ENCODE measurements at regions of chr1 and their contacts with region 1.

Region 1: DNA sequence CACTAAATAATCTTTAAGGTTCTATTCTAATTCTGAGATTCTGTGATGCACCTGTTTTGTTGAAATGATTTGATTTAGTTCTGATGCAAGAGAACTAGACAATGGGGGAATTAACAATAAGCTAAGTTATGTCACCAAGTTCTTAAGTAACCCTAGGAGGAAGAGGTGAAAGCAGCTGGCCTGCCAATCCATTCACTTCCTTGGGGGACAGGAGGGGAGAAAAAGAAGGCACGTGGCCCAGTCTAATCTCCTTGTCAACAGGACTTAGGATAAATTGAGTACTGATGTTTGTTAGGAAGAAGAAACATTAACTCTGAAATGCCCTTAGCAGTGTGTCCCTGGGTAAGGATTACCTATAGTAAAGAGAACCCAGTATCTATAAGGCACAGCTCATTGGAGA is 36.9 kb downstream of the TLCD4 start:
- DNase-seq: no peak
- ATAC-seq: no peak
- H3K4me3 Mint-ChIP-seq: no peak overlapping the region
- H3K27ac Mint-ChIP-seq: no peak overlapping the region
- H3K4me1 Mint-ChIP-seq: no peaks in the 10 kb centered on the region
- H3K27me3 Mint-ChIP-seq: no peaks in the 10 kb centered on the region
- CTCF ChIP-seq: no peak

Region 2: DNA sequence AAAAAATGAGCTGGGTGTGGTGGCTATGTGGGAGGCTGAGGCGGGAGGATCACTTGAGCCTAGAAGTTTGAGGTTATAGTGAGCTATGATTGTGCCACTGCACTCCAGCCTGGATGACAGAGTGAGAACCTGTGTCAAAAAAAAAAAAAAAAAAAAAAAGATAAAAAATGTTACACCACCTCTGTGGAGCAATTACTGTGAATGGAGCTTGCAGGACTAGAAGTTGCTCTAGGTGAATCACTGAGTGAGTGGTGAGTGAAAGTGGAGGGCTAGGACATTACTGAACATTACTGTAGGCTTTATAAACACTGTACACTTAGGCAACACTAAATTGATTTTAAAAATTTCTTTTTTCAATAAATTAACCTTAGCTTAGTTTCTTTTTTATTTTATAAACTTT is 15.1 kb before region 1 on chr1:
- CTCF ChIA-PET with region 1: no interaction called
- POLR2A ChIA-PET with region 1: no interaction called
- DNase-seq: no peak
- ATAC-seq: no peak
- H3K4me3 Mint-ChIP-seq: no peak overlapping the region
- H3K27ac Mint-ChIP-seq: no peak overlapping the region
- H3K4me1 Mint-ChIP-seq: peaks cover 9% of the 10 kb centered on the region
- H3K27me3 Mint-ChIP-seq: no peaks in the 10 kb centered on the region
- CTCF ChIP-seq: no peak

Region 3: DNA sequence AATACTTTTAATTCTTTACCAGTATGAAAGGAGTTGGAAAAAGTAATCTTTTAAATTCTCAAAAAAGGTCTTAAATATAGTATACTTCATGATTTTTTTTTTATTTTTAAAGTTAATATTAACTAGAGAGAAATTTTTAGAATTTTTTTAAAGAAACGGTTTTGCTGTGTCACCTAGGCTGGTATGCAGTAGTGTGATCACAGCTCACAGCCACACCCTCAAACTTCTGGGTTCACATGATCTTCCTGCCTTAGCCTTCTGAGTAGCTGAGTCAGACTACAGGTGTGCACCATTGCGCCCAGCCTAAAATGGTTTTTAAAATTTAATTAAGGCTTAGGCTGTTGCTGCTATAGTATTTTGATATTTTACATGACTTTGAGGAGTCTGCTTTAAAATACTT is 15.4 kb after region 1 on chr1:
- CTCF ChIA-PET with region 1: no interaction called
- POLR2A ChIA-PET with region 1: no interaction called
- DNase-seq: no peak
- ATAC-seq: no peak
- H3K4me3 Mint-ChIP-seq: no peak overlapping the region
- H3K27ac Mint-ChIP-seq: no peak overlapping the region
- H3K4me1 Mint-ChIP-seq: peaks cover 8% of the 10 kb centered on the region
- H3K27me3 Mint-ChIP-seq: no peaks in the 10 kb centered on the region
- CTCF ChIP-seq: no peak

Region 4: DNA sequence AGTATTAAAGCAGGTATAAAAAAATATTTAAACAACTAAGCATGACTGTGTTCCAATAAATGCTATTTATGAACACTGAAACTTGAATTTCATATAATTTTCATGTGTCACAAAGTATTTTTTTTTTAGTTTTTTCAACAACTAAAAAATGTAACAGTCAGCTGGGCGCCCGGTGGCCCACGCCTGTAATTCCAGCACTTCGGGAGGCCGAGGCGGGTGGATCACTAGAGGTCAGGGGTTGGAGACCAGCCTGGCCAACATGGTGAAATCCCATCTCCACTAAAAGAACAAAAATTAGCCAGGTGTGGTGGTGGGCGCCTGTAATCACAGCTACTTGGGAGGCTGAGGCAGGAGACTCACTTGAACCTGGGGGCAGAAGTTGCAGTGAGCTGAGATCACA is 122.3 kb after region 1 on chr1:
- CTCF ChIA-PET with region 1: no interaction called
- POLR2A ChIA-PET with region 1: interaction called, 11 read pairs
- DNase-seq: no peak
- ATAC-seq: no peak
- H3K4me3 Mint-ChIP-seq: no peak overlapping the region
- H3K27ac Mint-ChIP-seq: no peak overlapping the region
- H3K4me1 Mint-ChIP-seq: peaks cover 2% of the 10 kb centered on the region
- H3K27me3 Mint-ChIP-seq: no peaks in the 10 kb centered on the region
- CTCF ChIP-seq: no peak

Region 5: DNA sequence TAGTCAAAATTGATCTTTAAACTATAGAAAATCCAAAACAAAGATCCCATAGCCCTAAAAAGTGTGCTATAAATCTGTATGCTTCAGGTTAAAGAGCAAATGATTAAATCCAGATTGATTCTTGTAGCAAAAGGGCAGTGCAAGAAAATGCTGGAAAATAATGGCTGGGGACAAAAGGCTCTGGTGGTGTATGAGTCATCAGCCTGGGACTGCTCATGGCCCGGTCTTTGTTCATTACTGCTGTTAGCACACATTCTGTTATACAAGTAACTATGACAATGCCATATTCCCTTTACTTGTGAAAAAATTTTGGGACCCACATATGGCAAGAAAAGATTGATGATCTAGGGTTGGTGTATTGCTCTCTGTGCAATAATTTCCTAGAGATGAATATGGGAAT is 169.0 kb after region 1 on chr1:
- CTCF ChIA-PET with region 1: no interaction called
- POLR2A ChIA-PET with region 1: no interaction called
- DNase-seq: no peak
- ATAC-seq: no peak
- H3K4me3 Mint-ChIP-seq: no peak overlapping the region
- H3K27ac Mint-ChIP-seq: no peak overlapping the region
- H3K4me1 Mint-ChIP-seq: 0 out of 2 replicates have a peak, but pooled peaks cover 3% of the 10 kb centered on the region
- H3K27me3 Mint-ChIP-seq: no peaks in the 10 kb centered on the region
- CTCF ChIP-seq: no peak

Measured in WTC11 (cell line).